ENCODE measurements at regions of chr1 and their contacts with region 1.

Region 1: DNA sequence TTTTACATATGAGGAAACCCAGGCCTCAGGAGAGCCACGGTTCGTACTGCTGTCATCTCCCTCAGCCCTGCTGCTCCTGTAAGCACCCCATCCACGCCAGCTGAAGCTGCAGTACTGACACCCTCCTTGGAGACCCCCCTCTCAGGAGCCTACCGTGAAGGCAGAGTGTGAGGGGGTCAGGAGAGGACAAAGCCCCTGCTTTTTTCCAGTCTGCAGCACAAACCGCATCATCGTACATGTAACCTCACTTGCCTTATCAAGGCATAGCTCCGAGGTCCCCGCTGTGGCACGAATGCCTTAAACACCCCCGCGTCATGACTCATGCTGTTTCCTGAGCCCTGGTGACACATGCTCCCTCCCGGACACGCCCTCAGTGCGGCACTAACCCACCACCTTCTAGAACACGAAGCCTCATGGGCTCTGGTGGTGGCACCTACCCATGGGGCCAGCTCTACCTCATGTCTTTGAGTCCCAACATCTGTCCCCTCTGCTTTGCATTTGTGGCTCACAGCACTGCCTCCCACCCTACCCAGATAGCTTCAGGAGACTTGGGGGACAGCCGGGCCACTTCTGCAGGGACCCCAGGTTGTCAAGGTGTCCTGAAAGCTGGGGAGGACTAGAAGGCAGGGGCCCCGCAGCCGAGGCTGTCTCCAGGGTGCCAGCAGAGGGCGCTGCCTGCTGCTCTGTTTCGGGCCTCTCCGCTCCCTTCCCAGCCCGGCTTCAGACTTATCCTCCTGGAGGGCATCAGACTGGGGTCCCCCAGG is 4.9 kb downstream of the SH3BGRL3 start:
- DNase-seq: peak; percentile 72 to 97 (median 88)
- ATAC-seq: peak; percentile 67 to 81
- H3K4me3 Mint-ChIP-seq: peak overlapping the region; percentile 68 to 95 (median 89)
- H3K27ac Mint-ChIP-seq: peak overlapping the region; percentile 96 to 100 (median 98)
- H3K4me1 Mint-ChIP-seq: peaks cover 55 to 94% (median 91%) of the 10 kb centered on the region in 4 donors
- H3K27me3 Mint-ChIP-seq: no peaks in the 10 kb centered on the region

Region 2: DNA sequence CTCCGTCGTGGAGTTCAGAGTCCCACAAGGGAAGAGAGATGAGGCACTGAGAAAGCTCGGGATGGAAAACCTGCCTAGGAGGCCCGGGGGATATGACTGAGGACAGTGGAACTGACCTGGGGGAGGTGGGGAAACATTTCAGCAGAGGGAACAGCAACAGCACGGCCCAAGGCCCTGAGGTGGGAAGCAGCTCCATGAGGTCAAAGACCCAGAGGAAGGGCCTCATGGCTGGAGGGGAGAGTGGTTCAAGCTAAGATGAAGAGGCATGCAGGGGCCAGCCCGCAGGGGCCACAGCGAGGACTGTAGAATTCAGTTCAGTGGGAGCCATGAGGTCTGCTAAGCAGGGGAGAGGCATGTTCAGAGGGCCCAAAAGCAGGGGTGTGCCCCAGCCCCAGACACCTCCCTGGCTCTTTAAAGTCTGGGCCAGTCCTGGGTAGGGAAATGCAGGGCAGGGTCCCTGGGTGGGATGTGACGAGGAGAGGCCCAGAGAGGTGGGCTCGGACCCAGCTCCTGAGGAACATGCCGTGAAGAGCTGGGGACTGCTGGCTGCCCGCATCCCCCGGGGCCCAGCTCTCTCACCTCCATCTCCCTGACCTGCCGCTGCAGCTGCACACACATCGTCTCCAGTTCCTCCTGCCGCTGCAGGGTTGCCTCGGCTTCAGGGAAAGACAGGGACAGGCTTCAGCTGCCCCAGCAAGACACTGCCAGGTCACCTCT is 11.7 kb after region 1 on chr1:
- POLR2A ChIA-PET with region 1: interaction called, 197 read pairs
- DNase-seq: no peak
- ATAC-seq: no peak
- H3K4me3 Mint-ChIP-seq: no peak overlapping the region
- H3K27ac Mint-ChIP-seq: peak overlapping the region in 7 of 10 donors; percentile 20 to 85 (median 70)
- H3K4me1 Mint-ChIP-seq: peaks cover 20 to 51% (median 43%) of the 10 kb centered on the region in 4 donors
- H3K27me3 Mint-ChIP-seq: no peaks in the 10 kb centered on the region

Region 3: GRCh38 chr1:26306290-26307229 is 21.8 kb after region 1 on chr1 and contains the start of gene UBXN11:
- POLR2A ChIA-PET with region 1: interaction called, 2,161 read pairs
- DNase-seq: peak; percentile 79 to 97 (median 90)
- ATAC-seq: peak; percentile 94 to 97
- H3K4me3 Mint-ChIP-seq: peak within 1 kb of the TSS; percentile 90 to 100 (median 98)
- H3K27ac Mint-ChIP-seq: peak within 1 kb of the TSS; percentile 91 to 100 (median 98)
- H3K4me1 Mint-ChIP-seq: peaks cover 20 to 37% (median 33%) of the 10 kb centered on the region in 4 donors
- H3K27me3 Mint-ChIP-seq: no peaks in the 10 kb centered on the region
- polyA plus RNA-seq, gene UBXN11: 9.1 to 14.7 (median 12.4) TPM

Region 4: DNA sequence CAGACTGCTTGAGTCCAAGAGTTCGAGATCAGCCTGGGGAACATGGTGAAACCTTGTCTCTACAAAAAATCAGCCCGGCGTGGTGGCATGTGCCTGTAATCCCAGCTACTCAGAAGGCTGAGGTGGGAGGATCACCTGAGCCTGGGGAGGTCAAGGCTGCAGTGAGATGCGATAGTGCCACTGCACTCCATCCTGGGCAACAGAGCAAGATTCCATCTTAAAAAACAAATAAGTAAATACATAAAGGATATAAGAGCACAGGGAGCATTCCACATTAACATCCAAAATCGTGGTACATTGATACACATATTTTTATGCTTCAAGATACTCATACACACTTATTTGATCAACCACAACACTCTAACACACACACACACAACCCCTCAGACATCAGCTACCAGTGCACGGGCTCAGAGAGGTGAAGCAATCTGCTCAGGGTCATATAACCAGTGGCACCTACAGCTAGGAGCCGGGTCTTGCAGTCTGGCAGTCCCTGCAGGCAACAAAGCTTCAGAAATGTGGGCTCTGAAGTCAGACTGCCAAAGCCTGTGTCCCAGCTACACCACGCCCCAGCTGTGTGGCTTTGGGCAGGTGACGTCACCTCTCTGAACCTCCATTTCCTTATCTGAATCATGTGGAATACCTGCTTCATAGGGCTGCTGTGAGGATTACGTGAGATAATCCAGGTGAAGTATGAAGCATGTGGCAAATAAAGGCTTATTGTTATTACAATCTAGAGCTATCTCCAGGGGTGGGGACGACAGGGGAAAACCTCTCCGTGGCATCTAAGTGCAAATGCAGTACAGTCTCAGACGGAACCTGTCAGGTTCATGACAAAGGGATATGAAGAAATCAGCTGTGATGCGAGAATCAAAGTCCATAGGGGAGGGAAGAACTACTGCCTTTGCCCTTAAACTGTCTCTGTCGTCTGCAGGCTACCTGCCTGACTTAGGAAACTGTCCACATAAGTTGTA is 73.9 kb after region 1 on chr1:
- POLR2A ChIA-PET with region 1: interaction called, 11 read pairs
- DNase-seq: peak; percentile 37 to 87 (median 72)
- ATAC-seq: peak; percentile 84 to 89
- H3K4me3 Mint-ChIP-seq: peak overlapping the region; percentile 6 to 89 (median 56)
- H3K27ac Mint-ChIP-seq: peak overlapping the region; percentile 7 to 85 (median 56)
- H3K4me1 Mint-ChIP-seq: peaks cover 26 to 52% (median 49%) of the 10 kb centered on the region in 4 donors
- H3K27me3 Mint-ChIP-seq: peaks cover 3 to 19% (median 5%) of the 10 kb centered on the region in 5 donors

Region 5: DNA sequence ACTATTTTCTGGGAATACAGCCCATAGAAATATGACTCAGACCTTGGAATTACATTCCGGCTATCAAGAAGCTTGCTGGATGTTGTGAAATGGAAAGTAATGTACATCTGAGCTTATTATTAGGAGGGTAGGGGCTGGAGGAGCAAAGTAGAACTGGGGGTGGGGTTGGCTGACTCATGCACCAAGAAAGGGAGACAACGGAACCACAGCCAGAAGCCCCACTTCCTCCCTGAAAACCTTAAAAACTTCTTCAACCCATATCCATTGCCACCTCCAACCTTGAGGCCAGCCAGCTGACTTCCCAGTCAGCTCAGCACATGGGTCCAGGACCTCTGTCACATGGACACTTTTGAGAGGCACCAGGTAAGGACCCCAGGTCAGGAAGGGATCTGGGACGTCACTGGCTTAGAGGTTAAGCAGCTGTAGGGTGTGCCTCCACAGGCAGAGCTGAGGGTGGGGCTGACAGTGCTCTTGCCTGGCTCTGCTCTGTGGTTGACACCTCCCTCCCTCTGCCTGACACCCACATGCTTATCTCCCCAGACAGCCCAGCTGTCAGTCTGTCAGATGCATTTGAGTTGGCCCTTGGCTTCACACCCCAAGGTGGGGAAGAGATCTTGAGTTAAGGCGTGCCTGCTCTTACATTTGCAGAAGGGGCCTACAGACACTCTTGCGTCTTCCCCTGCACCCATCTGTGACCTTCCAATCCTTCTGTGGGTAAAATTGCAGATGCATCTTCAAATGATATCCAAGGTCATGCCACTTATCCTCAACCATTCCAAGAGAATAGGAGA is 93.5 kb after region 1 on chr1:
- POLR2A ChIA-PET with region 1: interaction called, 24 read pairs
- DNase-seq: peak in 9 of 10 donors; percentile 33 to 87 (median 71)
- ATAC-seq: peak; percentile 93 to 98
- H3K4me3 Mint-ChIP-seq: peak overlapping the region; percentile 65 to 84 (median 74)
- H3K27ac Mint-ChIP-seq: peak overlapping the region; percentile 66 to 94 (median 90)
- H3K4me1 Mint-ChIP-seq: peaks cover 40 to 74% (median 65%) of the 10 kb centered on the region in 4 donors
- H3K27me3 Mint-ChIP-seq: peaks cover 0 to 3% (median 0%) of the 10 kb centered on the region in 5 donors

Region 6: DNA sequence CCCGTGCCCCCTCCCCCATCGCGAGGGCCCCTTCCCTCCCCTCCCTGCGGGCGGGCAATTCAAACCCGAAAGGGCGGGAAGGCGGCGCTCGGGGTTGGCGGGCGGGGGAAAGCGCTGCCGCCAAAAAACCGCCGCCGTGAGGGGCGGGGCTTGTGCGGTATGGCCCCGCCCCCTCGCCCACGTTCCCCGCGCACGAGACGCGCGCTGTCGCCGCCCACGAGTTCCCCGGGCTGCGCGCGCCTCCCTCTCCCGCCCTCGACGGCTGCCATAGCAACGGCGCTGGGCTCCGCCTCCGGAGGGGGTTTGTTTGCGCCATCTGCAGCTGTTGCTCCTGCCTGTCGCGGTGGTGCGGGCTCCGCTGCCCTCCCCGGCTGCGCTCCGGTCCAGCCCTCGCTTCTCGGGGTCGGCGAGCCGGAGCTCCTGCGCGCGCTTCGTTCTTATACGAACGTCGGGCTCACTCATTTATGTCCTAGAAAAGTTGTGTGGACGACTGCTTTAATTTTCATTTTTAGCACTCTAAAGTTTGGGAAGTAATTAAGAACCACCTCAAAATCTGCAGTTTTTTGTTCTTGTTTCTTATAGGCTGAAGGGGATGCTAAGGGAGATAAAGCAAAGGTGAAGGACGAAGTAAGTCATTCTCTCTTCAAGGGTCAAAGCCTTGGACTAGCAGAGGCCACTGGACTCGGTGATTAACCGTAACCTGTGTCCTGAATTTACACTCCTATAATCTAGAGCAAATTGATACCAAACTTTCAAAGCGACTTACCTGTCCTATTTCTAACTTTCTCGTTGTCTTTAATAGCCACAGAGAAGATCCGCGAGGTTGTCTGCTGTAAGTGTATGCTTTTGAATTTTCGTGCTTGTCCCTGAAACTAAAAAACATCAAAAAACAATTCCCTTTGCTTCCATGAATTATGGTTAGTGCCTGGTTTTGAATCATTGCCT is 188.4 kb after region 1 on chr1:
- POLR2A ChIA-PET with region 1: interaction called, 11 read pairs
- DNase-seq: peak; percentile 94 to 98 (median 96)
- ATAC-seq: peak; percentile 71 to 76
- H3K4me3 Mint-ChIP-seq: peak overlapping the region; percentile 86 to 95 (median 89)
- H3K27ac Mint-ChIP-seq: peak overlapping the region; percentile 74 to 92 (median 90)
- H3K4me1 Mint-ChIP-seq: peaks cover 16 to 60% (median 54%) of the 10 kb centered on the region in 4 donors
- H3K27me3 Mint-ChIP-seq: no peaks in the 10 kb centered on the region

Measured in naive thymus-derived CD8-positive, alpha-beta T cell (primary cell).